Right ventricle myocardium superior (tissue), 1 donor: ENCODE measurements at regions of chr3 and their contacts with region 1.

Region 1: DNA sequence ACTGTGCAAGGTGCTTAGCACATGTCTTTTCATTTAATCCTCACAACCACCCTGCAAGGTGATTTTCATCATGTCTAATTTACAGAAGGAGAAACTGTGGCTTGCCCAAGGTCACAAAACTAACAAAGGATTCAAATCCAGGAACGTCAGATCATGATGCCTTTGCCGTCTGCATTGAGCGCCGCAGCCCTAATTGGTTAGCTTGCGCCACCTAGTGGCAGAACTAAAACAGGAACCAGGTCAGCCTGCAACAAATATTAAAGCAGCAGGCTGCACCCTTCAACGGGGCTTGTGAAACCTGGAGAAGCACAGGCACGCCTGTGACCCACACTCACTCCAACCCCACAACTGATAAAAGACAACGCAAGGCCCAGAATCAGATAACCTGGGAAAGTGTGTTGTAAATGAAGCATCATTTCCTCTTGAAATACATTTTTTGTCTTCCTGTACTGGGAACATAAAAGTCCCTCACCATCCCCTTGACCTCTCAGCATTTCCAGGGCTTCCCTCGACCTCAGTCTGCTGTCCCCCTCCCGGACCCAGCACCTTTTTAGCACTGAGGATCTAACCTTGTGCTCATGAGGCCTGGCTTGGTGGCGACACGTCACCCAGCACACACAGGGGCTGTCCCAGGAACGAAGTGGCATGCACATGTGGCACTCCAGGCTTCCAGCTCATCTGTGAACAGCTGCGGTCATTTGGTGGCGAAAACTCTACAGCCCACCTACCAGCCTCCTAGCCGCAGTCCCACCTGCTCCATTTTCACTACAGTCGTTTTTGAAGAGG is 17.3 kb downstream of the DPH3 start:
- DNase-seq: peak; percentile 78
- ATAC-seq: peak; percentile 69

Region 2: DNA sequence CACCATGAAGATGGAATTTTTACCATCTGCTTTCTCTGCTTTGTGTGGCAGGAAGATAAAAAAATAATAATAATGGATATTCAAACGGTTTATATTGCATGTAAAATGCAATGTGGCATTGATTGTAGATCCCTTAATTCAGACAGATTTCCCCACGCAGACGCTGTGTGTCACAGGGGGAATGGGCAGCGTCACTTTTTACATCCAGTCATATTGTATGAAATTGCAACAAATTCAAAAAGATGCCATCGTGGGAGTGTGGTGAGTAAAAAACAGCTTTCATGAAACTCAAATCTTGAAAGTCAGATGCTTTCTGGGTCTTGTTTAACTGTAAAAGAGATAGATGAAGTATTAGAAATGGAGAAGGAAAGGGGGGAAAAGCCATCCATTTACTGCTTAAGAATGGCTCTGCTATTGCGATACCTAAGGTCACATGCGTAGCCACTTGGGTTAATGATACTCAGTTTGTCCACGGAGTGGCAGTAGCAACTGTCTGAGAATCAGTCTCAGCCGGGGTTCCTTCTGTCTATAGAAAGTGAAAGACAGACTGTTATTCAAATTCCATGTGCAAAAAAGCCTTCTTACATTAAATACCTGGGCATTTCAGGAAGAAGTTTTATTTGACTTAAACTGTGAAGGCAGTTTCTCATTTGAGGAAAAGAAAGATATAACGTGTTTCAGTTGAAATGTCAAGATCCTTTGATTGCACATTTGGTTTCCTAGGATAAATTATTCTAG is 617.4 kb before region 1 on chr3:
- intact Hi-C with region 1: loop called (anchors 10 kb)
- DNase-seq: no peak
- ATAC-seq: peak; percentile 95